Psoas muscle (tissue), 8 donors: ENCODE measurements at regions of chr2 and their contacts with region 1.

Region 1: GRCh38 chr2:120174963-120175581 is 48.1 kb downstream of the TMEM185B start:
- DNase-seq: no peak
- ATAC-seq: peak in 2 of 4 donors; percentile 64 to 73
- H3K4me3 ChIP-seq: no peak overlapping the region
- H3K27ac ChIP-seq: no peak overlapping the region
- H3K4me1 ChIP-seq: peaks cover 19% of the 10 kb centered on the region
- H3K27me3 ChIP-seq: no peaks in the 10 kb centered on the region
- CTCF ChIP-seq: peak; percentile 82

Region 2: DNA sequence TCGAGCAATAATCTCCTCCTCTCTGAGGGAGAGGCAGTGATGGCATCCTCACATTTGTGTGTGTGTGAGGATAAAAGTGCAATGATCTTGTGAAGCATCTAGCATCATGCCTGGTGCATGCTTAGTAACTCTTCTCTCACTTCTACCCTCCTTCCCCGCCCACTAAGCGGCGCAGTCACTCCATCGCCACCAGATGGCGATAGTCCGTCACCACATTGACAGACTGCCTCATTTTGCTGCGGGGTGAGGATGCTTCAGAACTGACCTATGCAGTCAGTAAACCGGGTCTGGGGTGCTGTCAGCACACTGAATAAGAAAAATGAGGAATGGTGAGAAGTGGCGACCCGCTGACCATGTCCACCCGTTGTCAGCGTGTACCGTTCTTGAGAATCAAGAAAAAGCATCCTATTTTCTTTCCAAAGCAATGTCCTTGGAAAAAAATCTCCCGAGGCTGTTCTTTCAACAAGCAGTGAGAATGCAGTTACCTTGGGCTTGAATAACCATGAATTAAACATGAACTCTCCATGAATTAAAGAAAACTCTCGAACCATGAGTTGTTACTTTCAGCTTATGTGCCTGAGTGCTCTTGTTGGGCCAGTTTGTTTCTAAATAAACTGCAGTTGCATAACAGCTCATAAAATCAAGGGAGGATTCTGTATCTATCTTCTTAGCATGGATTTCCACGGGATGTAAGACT is 533.4 kb before region 1 on chr2:
- intact Hi-C with region 1: loop called in 1 of 2 experiments (anchors 5 kb)
- DNase-seq: peak; percentile 63 to 76
- ATAC-seq: peak; percentile 64 to 92 (median 82)
- H3K4me3 ChIP-seq: no peak overlapping the region
- H3K27ac ChIP-seq: no peak overlapping the region
- H3K4me1 ChIP-seq: no peaks in the 10 kb centered on the region
- H3K27me3 ChIP-seq: no peaks in the 10 kb centered on the region
- CTCF ChIP-seq: peak; percentile 91

Region 3: DNA sequence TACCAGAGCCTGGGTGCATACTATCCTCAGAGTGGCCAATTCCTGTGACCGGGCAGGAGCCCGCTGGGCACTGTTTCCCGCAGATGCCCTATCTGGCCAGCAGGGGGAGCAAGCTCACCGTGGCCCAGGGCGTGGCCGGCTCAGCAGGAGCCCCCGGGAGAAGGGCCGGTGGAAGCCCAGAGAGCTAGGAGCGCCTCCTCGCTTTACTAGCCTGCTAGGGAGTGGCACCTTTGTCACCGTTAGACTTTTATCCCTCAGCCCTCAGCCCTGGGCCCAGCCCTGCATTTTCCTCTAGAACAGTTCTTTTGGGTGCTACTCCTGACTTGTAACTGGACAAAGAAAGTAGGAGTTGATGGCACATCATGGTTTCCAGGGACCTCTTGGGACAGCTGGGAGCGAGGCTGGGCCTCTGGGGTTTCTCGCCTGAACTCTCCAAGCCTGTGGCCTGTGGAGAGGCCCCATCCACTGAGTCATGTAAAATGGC is 472.1 kb before region 1 on chr2:
- intact Hi-C with region 1: loop called (anchors 2 to 5 kb)
- DNase-seq: peak; percentile 69 to 80
- ATAC-seq: peak; percentile 96 to 99 (median 96)
- H3K4me3 ChIP-seq: no peak overlapping the region
- H3K27ac ChIP-seq: no peak overlapping the region
- H3K4me1 ChIP-seq: no peaks in the 10 kb centered on the region
- H3K27me3 ChIP-seq: no peaks in the 10 kb centered on the region
- CTCF ChIP-seq: peak; percentile 96

Region 4: GRCh38 chr2:119753041-119753929 is 421.8 kb before region 1 on chr2:
- intact Hi-C with region 1: loop called (anchors 5 to 10 kb)
- DNase-seq: no peak
- ATAC-seq: peak; percentile 46 to 79 (median 55)
- H3K4me3 ChIP-seq: no peak overlapping the region
- H3K27ac ChIP-seq: peak overlapping the region; percentile 37
- H3K4me1 ChIP-seq: peaks cover 20% of the 10 kb centered on the region
- H3K27me3 ChIP-seq: no peaks in the 10 kb centered on the region
- CTCF ChIP-seq: peak; percentile 76

Region 5: DNA sequence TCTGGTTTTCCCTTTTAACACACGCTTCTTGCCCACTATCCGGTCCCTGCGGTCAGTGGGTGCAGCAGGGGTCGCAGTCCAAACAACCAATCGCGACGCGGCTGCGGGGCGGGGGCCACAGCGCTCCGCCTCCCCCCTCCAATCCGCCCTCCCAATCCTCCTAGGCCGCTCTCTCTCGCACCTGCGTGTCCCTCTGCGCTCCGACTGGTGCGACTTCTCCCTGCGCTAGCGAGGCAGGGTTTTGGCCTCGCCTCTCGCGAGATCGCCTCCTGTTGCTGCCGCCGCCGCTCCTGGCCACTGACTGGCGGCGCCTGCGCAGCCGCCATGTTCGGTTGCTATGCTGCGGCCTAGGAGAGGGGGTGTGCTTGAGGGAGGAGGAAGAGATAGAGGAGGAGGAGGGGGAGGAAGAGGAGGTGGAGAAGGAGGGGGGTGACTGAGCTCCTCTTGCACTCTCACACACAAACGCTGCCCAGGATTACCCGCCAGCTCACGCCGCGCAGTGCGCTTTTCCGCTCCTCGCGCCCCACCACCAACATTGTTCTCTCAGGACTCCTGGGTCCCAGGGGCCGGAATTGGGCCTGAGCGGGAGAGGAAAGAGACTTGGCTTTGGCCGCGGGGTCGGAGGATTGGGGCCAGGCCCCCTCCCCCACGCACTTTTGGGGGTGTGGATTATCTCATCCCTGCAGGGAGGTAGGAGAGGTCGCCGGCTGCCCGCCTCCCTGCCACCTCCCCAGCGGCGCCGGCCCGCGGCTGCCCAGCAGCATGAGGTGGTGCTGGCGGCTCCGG is 415.4 kb before region 1 on chr2 and contains the start of gene PTPN4:
- intact Hi-C with region 1: loop called (anchors 5 to 10 kb)
- DNase-seq: peak; percentile 96 to 98
- ATAC-seq: peak; percentile 92 to 95 (median 93)
- H3K4me3 ChIP-seq: peak within 1 kb of the TSS; percentile 92
- H3K27ac ChIP-seq: peak within 1 kb of the TSS; percentile 92
- H3K4me1 ChIP-seq: peaks cover 45% of the 10 kb centered on the region
- H3K27me3 ChIP-seq: no peaks in the 10 kb centered on the region
- CTCF ChIP-seq: no peak
- total RNA-seq, gene PTPN4: 17.3 to 35.4 (median 29.2) TPM

Region 6: DNA sequence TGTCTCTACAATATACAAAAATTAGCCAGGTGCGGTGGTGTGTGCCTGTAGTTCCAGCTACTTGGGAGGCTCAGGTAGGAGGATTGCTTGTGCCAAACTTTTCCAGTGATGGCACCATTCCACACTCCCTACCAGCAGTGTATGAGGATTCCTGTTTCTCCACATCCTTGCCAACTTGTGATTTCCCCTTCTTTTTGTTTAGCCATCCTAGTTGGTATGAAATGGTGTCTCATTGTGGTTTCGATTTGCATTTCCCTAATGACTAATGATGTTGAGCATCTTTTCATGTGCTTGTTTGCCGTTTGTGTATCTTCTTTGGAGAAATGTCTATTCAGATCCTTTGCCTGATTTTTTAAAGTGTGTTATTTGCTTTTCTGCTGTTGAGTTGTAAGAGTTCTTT is 121.2 kb before region 1 on chr2:
- intact Hi-C with region 1: no loop called
- DNase-seq: no peak
- ATAC-seq: no peak
- H3K4me3 ChIP-seq: no peak overlapping the region
- H3K27ac ChIP-seq: no peak overlapping the region
- H3K4me1 ChIP-seq: peaks cover 3% of the 10 kb centered on the region
- H3K27me3 ChIP-seq: no peaks in the 10 kb centered on the region
- CTCF ChIP-seq: no peak

Region 7: DNA sequence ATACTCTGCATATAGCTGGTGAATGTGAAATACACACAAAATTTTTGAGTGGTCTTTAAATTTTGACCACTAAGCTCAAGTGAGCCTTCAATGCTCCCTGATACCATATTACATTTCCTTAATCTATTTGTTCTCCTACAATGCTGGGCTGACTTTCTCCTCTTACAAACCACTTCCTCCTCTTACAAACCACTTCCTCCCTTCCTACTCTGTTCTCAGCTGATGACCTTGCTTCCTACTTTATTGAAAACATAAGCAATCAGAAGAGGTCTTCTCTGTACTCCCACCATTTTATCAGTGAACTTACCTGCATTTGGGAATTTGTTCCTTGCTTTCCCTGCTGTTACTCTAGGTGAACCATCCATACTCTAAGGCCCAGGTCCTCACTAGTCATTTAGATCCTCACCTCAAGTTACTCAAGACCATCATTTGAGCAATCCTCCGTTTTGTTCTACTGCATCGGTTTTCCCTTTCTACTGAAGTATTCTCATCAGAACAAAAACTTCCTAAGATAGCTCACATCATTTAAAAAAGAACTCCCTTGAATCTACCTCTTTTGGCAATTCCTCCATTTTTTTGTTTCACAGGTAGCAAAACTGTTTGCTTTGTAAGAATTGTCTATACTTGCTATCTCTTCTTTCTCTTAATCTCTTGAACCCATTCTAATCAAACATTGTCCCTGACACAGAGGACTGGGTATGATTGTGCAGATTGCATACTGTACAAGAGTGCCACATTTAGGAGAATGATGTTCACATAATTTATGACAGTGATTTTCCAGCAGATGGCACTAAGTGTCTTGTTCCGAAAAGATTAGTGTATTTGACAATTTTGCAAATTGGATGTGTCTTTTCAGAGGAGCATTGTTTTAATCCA is 65.6 kb before region 1 on chr2:
- intact Hi-C with region 1: loop called (anchors 5 kb)
- DNase-seq: no peak
- ATAC-seq: peak; percentile 44 to 66 (median 56)
- H3K4me3 ChIP-seq: no peak overlapping the region
- H3K27ac ChIP-seq: no peak overlapping the region
- H3K4me1 ChIP-seq: peaks cover 23% of the 10 kb centered on the region
- H3K27me3 ChIP-seq: no peaks in the 10 kb centered on the region
- CTCF ChIP-seq: peak; percentile 41

Region 8: GRCh38 chr2:120134263-120134662 is 40.8 kb before region 1 on chr2:
- intact Hi-C with region 1: no loop called
- DNase-seq: no peak
- ATAC-seq: no peak
- H3K4me3 ChIP-seq: no peak overlapping the region
- H3K27ac ChIP-seq: no peak overlapping the region
- H3K4me1 ChIP-seq: no peaks in the 10 kb centered on the region
- H3K27me3 ChIP-seq: no peaks in the 10 kb centered on the region
- CTCF ChIP-seq: no peak

Region 9: DNA sequence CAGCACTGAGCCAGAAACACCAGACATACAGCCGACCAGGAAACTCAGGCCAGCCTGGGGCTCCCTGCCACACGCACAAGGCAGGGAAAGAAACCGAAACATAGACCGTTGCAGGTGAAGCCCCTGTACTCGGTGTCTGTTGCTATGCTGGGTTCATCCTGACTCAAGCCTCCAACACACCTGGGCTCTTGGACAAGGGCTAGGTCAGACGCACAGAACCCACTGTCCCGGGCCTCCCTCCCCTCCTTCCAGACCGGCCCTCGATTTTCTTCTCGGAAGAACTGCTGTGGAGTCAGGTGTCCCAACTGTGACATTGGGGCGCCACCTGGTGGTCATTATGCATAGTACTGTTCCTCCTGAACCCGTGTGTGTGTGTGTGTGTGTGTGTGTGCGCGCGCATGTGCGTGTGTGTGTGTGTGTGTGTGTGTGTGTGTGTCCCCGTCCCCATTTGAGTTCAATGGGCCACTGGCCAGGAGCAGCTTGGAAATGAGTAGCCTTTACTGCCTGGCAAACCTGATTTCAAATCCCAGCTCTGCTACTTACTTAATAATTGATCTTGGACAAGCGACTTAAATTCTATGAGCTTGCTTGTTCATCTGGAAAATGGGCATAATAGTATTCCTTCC is 505.2 kb after region 1 on chr2:
- intact Hi-C with region 1: loop called in 1 of 2 experiments (anchors 10 kb)
- DNase-seq: peak; percentile 85 to 89
- ATAC-seq: peak; percentile 78 to 91 (median 86)
- H3K4me3 ChIP-seq: no peak overlapping the region
- H3K27ac ChIP-seq: no peak overlapping the region
- H3K4me1 ChIP-seq: peaks cover 3% of the 10 kb centered on the region
- H3K27me3 ChIP-seq: peaks cover 0 to 5% (median 0%) of the 10 kb centered on the region in 3 donors
- CTCF ChIP-seq: peak; percentile 45